Natural killer cell (primary cell): ENCODE measurements at regions of chr15 and their contacts with region 1.

Region 1: GRCh38 chr15:65869127-65869953 is at the start of gene RAB11A:
- DNase-seq: peak; percentile 94 to 98
- ATAC-seq: peak; percentile 90 to 98 (median 93)
- H3K4me3 ChIP-seq: peak within 1 kb of the TSS; percentile 85
- H3K4me3 Mint-ChIP-seq: peak within 1 kb of the TSS; percentile 99
- H3K27ac ChIP-seq: peak within 1 kb of the TSS; percentile 82
- H3K27ac Mint-ChIP-seq: peak within 1 kb of the TSS; percentile 98 to 100
- H3K4me1 ChIP-seq: peaks cover 11% of the 10 kb centered on the region
- H3K4me1 Mint-ChIP-seq: peaks cover 31 to 40% of the 10 kb centered on the region in 2 donors
- H3K27me3 ChIP-seq: no peaks in the 10 kb centered on the region
- H3K27me3 Mint-ChIP-seq: no peaks in the 10 kb centered on the region
- CTCF ChIP-seq: peak; percentile 61
- total RNA-seq, gene RAB11A: 84.7 to 97.1 (median 87.5) TPM

Region 2: DNA sequence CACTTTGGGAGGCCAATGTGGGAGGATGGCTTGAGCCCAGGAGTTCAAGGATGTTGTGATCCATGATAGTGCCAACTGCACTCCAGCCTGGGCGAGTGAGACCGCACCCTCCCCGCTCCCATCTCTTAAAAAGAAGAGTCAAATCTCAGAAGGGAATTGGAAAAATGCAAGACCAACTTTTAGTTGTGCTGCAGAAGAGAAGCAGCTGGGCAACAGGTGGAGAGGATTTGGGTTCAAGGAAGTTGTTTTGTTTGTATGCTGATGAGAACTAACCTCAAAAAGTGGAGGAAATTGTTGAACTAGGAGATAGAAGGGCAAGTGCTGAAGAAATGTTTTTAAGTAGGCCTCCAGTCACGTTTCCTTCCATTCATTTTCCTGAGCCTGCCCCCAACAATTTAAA is 722.9 kb before region 1 on chr15:
- intact Hi-C with region 1: no loop called
- DNase-seq: no peak
- ATAC-seq: no peak
- H3K4me3 ChIP-seq: no peak overlapping the region
- H3K4me3 Mint-ChIP-seq: no peak overlapping the region
- H3K27ac ChIP-seq: no peak overlapping the region
- H3K27ac Mint-ChIP-seq: no peak overlapping the region
- H3K4me1 ChIP-seq: no peaks in the 10 kb centered on the region
- H3K4me1 Mint-ChIP-seq: no peaks in the 10 kb centered on the region
- H3K27me3 ChIP-seq: no peaks in the 10 kb centered on the region
- H3K27me3 Mint-ChIP-seq: no peaks in the 10 kb centered on the region
- CTCF ChIP-seq: no peak

Region 3: GRCh38 chr15:65476903-65477302 is 392.4 kb before region 1 on chr15:
- intact Hi-C with region 1: no loop called
- DNase-seq: no peak
- ATAC-seq: no peak
- H3K4me3 ChIP-seq: no peak overlapping the region
- H3K4me3 Mint-ChIP-seq: no peak overlapping the region
- H3K27ac ChIP-seq: no peak overlapping the region
- H3K27ac Mint-ChIP-seq: peak overlapping the region in 1 of 2 donors; percentile 13
- H3K4me1 ChIP-seq: no peaks in the 10 kb centered on the region
- H3K4me1 Mint-ChIP-seq: peaks cover 0 to 5% of the 10 kb centered on the region in 2 donors
- H3K27me3 ChIP-seq: no peaks in the 10 kb centered on the region
- H3K27me3 Mint-ChIP-seq: no peaks in the 10 kb centered on the region
- CTCF ChIP-seq: no peak

Region 4: DNA sequence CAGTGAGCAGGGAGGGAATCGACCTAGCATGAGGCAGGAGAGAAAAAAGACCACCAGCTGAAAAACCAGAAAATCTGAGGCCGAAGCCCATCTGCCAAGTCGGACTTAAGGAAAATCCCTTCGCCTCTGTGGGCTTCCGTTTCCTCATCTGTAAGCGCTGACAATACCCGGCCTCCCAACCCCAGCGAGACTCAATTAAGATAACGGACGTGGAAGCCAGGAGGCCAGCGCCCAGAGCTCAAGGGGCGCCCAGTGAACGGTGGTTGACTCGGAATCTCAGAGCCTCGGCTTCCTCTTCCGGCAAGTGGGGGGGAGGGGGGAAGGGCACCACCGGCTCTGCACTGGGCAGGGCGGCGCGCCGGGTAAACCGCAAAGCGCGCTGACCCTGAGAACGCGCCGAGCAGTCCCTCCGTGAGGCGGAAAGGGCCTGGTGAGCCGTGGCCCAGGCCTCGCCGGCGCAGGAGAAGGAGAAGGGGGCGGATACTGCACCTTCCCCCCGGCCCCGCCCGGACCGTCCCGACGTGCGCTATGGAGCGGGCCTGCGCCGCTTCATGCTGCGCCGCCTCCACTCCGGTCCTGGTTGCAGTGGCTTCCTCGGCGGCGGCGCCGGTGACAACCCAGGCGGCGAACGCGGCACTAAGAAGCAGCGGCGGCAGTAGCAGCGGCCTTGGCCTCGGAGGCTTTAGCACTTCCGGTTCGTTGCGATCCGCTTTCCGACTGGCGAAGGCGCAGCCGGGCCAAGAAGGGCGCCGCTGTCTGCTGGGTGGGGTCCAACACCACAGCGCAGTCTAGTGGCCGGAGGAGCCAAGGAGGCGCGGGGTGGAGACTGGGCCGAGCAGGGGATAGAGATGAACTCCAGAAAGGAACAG is 352.1 kb before region 1 on chr15 and contains the start of gene DPP8:
- intact Hi-C with region 1: loop called (anchors 1 kb)
- DNase-seq: peak; percentile 93 to 96
- ATAC-seq: peak; percentile 77 to 94 (median 79)
- H3K4me3 ChIP-seq: peak within 1 kb of the TSS; percentile 80
- H3K4me3 Mint-ChIP-seq: peak within 1 kb of the TSS; percentile 88
- H3K27ac ChIP-seq: peak within 1 kb of the TSS; percentile 82
- H3K27ac Mint-ChIP-seq: peak within 1 kb of the TSS; percentile 85 to 89
- H3K4me1 ChIP-seq: peaks cover 22% of the 10 kb centered on the region
- H3K4me1 Mint-ChIP-seq: peaks cover 40 to 50% of the 10 kb centered on the region in 2 donors
- H3K27me3 ChIP-seq: no peaks in the 10 kb centered on the region
- H3K27me3 Mint-ChIP-seq: no peaks in the 10 kb centered on the region
- CTCF ChIP-seq: peak; percentile 90
- total RNA-seq, gene DPP8: 51.7 to 64.8 (median 62.4) TPM

Region 5: GRCh38 chr15:65610871-65611718 is 258.2 kb before region 1 on chr15 and contains the start of gene INTS14:
- intact Hi-C with region 1: loop called (anchors 1 kb)
- DNase-seq: peak; percentile 83 to 95
- ATAC-seq: peak; percentile 94 to 96 (median 95)
- H3K4me3 ChIP-seq: peak within 1 kb of the TSS; percentile 79
- H3K4me3 Mint-ChIP-seq: peak within 1 kb of the TSS; percentile 99
- H3K27ac ChIP-seq: peak within 1 kb of the TSS; percentile 93
- H3K27ac Mint-ChIP-seq: peak within 1 kb of the TSS; percentile 97
- H3K4me1 ChIP-seq: peaks cover 24% of the 10 kb centered on the region
- H3K4me1 Mint-ChIP-seq: peaks cover 22 to 34% of the 10 kb centered on the region in 2 donors
- H3K27me3 ChIP-seq: no peaks in the 10 kb centered on the region
- H3K27me3 Mint-ChIP-seq: no peaks in the 10 kb centered on the region
- CTCF ChIP-seq: peak; percentile 30
- total RNA-seq, gene INTS14: 23.5 to 33.6 (median 26.4) TPM